ENCODE measurements at regions of chr18 and their contacts with region 1.

Region 1: GRCh38 chr18:23515911-23516546 is 12.7 kb downstream of the RMC1 start:
- DNase-seq: peak in 4 of 5 donors; percentile 72 to 78 (median 74)
- ATAC-seq: peak; percentile 91 to 96 (median 94)
- H3K4me3 ChIP-seq: no peak overlapping the region
- H3K27ac ChIP-seq: no peak overlapping the region
- H3K4me1 ChIP-seq: peaks cover 0 to 17% (median 0%) of the 10 kb centered on the region in 12 donors
- H3K27me3 ChIP-seq: no peaks in the 10 kb centered on the region
- CTCF ChIP-seq: peak; percentile 78 to 91 (median 88)
- POLR2A ChIP-seq: no peak

Region 2: GRCh38 chr18:23166891-23167541 is 349.0 kb before region 1 on chr18:
- intact Hi-C with region 1: no loop called
- DNase-seq: peak in 1 of 5 donors; percentile 37
- ATAC-seq: peak in 2 of 4 donors; percentile 60 to 66
- H3K4me3 ChIP-seq: no peak overlapping the region
- H3K27ac ChIP-seq: peak overlapping the region in 5 of 12 donors; percentile 10 to 27 (median 22)
- H3K4me1 ChIP-seq: peaks cover 0 to 26% (median 2%) of the 10 kb centered on the region in 12 donors
- H3K27me3 ChIP-seq: no peaks in the 10 kb centered on the region
- CTCF ChIP-seq: no peak
- POLR2A ChIP-seq: no peak

Region 3: GRCh38 chr18:23586249-23587196 is 70.5 kb after region 1 on chr18 and contains the start of gene NPC1:
- intact Hi-C with region 1: loop called (anchors 1 to 5 kb)
- DNase-seq: peak; percentile 94 to 98 (median 96)
- ATAC-seq: peak; percentile 98 to 99 (median 98)
- H3K4me3 ChIP-seq: peak within 1 kb of the TSS; percentile 63 to 99 (median 84)
- H3K27ac ChIP-seq: peak within 1 kb of the TSS; percentile 94 to 100 (median 98)
- H3K4me1 ChIP-seq: peaks cover 0 to 38% (median 25%) of the 10 kb centered on the region in 12 donors
- H3K27me3 ChIP-seq: peaks cover 0 to 2% (median 0%) of the 10 kb centered on the region in 9 donors
- CTCF ChIP-seq: peak; percentile 88 to 99 (median 98)
- POLR2A ChIP-seq: peak; percentile 4 to 92
- total RNA-seq, gene NPC1: 10.2 to 42.7 (median 16.8) TPM

Region 4: GRCh38 chr18:23703057-23703986 is 187.3 kb after region 1 on chr18:
- intact Hi-C with region 1: loop called in 5 of 10 experiments (anchors 5 to 10 kb)
- DNase-seq: peak in 1 of 5 donors; percentile 28
- ATAC-seq: peak; percentile 50 to 89 (median 77)
- H3K4me3 ChIP-seq: no peak overlapping the region
- H3K27ac ChIP-seq: peak overlapping the region in 2 of 12 donors; percentile 26 to 55
- H3K4me1 ChIP-seq: peaks cover 0 to 9% (median 0%) of the 10 kb centered on the region in 12 donors
- H3K27me3 ChIP-seq: no peaks in the 10 kb centered on the region
- CTCF ChIP-seq: peak; percentile 38 to 74 (median 56)
- POLR2A ChIP-seq: no peak

Region 5: DNA sequence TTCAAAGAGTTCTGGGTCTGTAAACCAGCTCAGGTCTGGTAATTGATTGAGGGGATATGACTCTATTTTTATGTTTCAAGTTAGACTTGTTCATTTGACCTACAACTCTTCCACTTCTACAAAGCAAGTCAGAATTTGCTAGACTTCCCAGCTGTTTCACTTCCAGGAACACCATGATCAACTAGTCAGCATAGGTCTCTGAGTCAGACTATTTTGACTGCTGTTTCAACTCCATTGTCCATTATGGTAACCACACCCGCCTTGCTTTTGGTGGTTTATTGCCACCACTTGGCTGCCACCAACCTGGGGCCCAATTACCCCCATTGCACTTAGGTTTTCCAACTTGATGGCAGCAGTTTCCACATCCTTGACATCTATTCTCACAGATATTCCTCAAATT is 289.9 kb after region 1 on chr18:
- intact Hi-C with region 1: loop called in 4 of 10 experiments (anchors 5 to 10 kb)
- DNase-seq: no peak
- ATAC-seq: no peak
- H3K4me3 ChIP-seq: no peak overlapping the region
- H3K27ac ChIP-seq: no peak overlapping the region
- H3K4me1 ChIP-seq: no peaks in the 10 kb centered on the region
- H3K27me3 ChIP-seq: no peaks in the 10 kb centered on the region
- CTCF ChIP-seq: no peak
- POLR2A ChIP-seq: no peak

Region 6: GRCh38 chr18:23837591-23837990 is 321.6 kb after region 1 on chr18:
- intact Hi-C with region 1: no loop called
- DNase-seq: no peak
- ATAC-seq: peak in 3 of 4 donors; percentile 79 to 83 (median 81)
- H3K4me3 ChIP-seq: no peak overlapping the region
- H3K27ac ChIP-seq: peak overlapping the region in 8 of 12 donors; percentile 27 to 59 (median 35)
- H3K4me1 ChIP-seq: peaks cover 0 to 19% (median 9%) of the 10 kb centered on the region in 12 donors
- H3K27me3 ChIP-seq: no peaks in the 10 kb centered on the region
- CTCF ChIP-seq: no peak
- POLR2A ChIP-seq: no peak

Measured in heart left ventricle (tissue), 16 donors.